ENCODE measurements at regions of chr19 and their contacts with region 1.

Region 1: DNA sequence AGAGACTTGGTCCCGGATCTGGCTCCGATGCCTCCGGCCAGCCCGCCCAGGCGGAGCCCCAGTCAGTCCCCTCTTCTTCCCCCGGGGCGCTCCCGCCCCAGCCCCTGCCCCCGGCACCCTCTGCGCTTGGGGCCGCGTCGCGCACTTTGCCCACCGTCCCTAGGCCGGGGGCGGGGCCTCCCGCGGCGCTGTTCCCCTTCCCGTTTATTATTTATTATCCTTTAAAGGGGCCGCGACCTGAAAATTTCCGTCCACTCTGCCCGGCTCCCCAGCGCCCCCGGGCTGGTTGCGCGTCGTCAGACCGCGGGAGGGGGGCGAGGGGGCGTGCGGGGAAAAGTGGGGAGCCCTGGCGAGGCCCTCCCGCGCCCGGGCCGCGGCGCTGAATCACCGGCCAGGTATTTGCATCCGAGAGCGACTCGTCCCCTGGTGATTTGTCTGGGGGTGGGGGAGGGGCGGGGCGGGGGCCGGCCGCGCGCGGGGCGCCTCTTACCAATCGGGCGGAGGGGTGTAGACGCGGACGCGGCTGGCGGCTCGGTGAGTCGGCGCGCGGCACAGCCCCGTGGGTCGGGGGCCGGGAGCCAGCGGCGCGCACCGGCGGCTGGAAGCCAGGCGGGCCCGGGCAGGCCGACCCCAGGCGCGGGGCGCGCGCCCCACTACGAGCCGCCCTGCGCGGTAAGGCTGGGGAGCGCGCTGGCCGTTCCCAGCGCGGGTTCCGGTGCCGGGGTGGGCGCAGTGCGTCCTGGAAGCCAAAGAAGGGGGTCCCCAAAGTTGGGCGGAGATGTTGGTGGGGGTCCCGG is at the start of gene ARID3A:
- DNase-seq: peak; percentile 77
- H3K4me3 Mint-ChIP-seq: peak within 1 kb of the TSS; percentile 83
- H3K27ac Mint-ChIP-seq: peak within 1 kb of the TSS; percentile 80
- H3K4me1 Mint-ChIP-seq: peaks cover 10% of the 10 kb centered on the region
- H3K27me3 Mint-ChIP-seq: peaks cover under 1% of the 10 kb centered on the region
- total RNA-seq, gene ARID3A: 42.0 and 42.6 TPM in 2 replicates

Region 2: GRCh38 chr19:940591-941291 is 15.0 kb after region 1 on chr19:
- intact Hi-C with region 1: no loop called
- DNase-seq: no peak
- H3K4me3 Mint-ChIP-seq: peak overlapping the region; percentile 69
- H3K27ac Mint-ChIP-seq: no peak overlapping the region
- H3K4me1 Mint-ChIP-seq: peaks cover 12% of the 10 kb centered on the region
- H3K27me3 Mint-ChIP-seq: peaks cover 3% of the 10 kb centered on the region

Region 3: DNA sequence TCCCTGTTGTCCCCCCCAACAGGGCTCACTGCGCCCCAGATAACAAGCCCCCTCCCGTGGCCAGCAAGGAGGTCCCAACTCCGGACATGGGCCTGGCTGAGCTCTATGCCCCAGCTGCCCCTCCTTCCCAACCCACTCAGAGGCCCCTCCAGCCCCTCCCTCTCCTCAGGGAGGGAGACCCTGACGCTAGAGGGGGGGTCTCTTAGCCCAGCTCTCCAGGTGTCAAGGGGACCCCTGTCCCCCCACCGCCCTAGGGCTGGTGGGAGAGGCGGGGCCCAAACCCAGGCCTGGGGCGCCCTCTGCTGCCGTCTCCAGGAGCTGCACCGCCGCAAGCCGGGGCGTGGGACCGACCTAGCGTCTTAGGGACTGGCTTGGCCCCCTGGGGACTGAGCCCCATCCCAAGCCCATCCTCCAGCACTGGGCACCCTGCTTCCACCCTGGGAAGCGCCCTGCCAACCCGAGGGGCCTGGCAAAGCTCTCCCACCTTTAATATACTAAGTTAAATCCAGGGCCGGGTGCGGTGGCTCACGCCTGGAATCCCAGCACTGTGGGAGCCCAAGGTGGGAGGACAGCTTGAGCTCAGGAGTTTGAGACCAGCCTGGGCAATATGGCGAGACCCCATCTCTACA is 75.9 kb after region 1 on chr19:
- intact Hi-C with region 1: loop called (anchors 2 kb)
- DNase-seq: peak; percentile 49
- H3K4me3 Mint-ChIP-seq: no peak overlapping the region
- H3K27ac Mint-ChIP-seq: no peak overlapping the region
- H3K4me1 Mint-ChIP-seq: peaks cover 1% of the 10 kb centered on the region
- H3K27me3 Mint-ChIP-seq: peaks cover 23% of the 10 kb centered on the region

Region 4: DNA sequence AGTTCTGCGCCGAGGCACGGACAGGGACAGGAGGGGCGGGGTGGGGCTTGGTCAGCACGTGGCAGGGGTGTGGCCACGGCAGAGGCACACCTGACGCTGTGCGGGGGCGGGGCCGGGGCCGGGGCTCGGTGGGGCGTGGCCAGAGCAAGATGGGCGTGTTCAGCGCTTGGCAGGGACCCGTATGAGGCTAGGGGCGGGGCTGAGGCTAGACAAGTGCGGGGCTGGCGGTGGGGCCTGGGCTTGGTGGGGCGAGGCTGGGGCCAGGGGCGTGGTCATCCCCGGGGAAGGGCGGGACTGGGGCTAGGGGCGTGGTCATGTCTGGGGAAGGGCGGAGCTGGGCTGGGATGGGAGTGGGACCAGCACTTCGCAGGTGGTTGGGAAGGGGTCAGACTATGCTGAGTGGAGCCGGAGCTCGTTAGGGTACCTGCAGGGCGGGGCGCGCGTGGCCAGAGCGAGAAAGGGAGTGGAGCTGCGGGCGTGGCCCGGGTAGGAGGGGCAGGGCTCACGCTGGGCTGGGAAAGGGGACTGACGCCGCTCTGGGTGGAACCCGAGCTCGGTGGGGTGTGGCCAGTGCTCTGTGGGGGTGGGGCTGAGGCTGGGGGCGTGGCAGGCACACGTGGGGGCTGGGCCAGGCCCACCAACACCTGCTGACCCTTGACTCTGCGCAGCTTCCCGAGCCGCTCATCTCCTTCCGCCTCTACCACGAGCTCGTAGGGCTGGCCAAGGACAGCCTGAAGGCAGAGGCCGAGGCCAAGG is 156.6 kb after region 1 on chr19:
- intact Hi-C with region 1: loop called (anchors 10 kb)
- DNase-seq: peak; percentile 79
- H3K4me3 Mint-ChIP-seq: no peak overlapping the region
- H3K27ac Mint-ChIP-seq: no peak overlapping the region
- H3K4me1 Mint-ChIP-seq: peaks cover 11% of the 10 kb centered on the region
- H3K27me3 Mint-ChIP-seq: no peaks in the 10 kb centered on the region